ENCODE measurements at regions of chr3 and their contacts with region 1.

Region 1: GRCh38 chr3:116770815-116771450 is 61.4 kb downstream of the TUSC7 start:
- DNase-seq: peak; percentile 55
- H3K4me3 ChIP-seq: peak overlapping the region in 1 of 2 experiments; percentile 55; a peak in 1 of 4 replicates
- H3K27ac ChIP-seq: peak overlapping the region in 1 of 2 experiments; percentile 43; a peak in 1 of 4 replicates
- H3K4me1 ChIP-seq: no peaks in the 10 kb centered on the region; a peak in 2 of 4 replicates
- H3K27me3 ChIP-seq: no peaks in the 10 kb centered on the region
- CTCF ChIP-seq: peak; percentile 99
- EP300 ChIP-seq: no peak
- RAD21 ChIP-seq: peak; percentile 99

Region 2: GRCh38 chr3:116815321-116815720 is 44.4 kb after region 1 on chr3:
- CTCF ChIA-PET with region 1: interaction called, 11 read pairs
- POLR2A ChIA-PET with region 1: no interaction called
- DNase-seq: no peak
- H3K4me3 ChIP-seq: no peak overlapping the region
- H3K27ac ChIP-seq: peak overlapping the region; percentile 61 to 97; a peak in 3 of 4 replicates
- H3K4me1 ChIP-seq: peaks cover 11 to 30% of the 10 kb centered on the region in 2 experiments; a peak in 3 of 4 replicates
- H3K27me3 ChIP-seq: no peaks in the 10 kb centered on the region
- CTCF ChIP-seq: no peak
- EP300 ChIP-seq: no peak
- RAD21 ChIP-seq: no peak

Region 3: GRCh38 chr3:116912116-116912515 is 141.2 kb after region 1 on chr3:
- CTCF ChIA-PET with region 1: interaction called, 10 read pairs
- POLR2A ChIA-PET with region 1: no interaction called
- DNase-seq: no peak
- H3K4me3 ChIP-seq: no peak overlapping the region
- H3K27ac ChIP-seq: peak overlapping the region in 1 of 2 experiments; percentile 98; a peak in 2 of 4 replicates
- H3K4me1 ChIP-seq: peaks cover 0 to 12% of the 10 kb centered on the region in 2 experiments; a peak in 2 of 4 replicates
- H3K27me3 ChIP-seq: no peaks in the 10 kb centered on the region
- CTCF ChIP-seq: no peak
- EP300 ChIP-seq: peak in 1 of 2 experiments; percentile 44; a peak in 1 of 4 replicates
- RAD21 ChIP-seq: no peak

Region 4: DNA sequence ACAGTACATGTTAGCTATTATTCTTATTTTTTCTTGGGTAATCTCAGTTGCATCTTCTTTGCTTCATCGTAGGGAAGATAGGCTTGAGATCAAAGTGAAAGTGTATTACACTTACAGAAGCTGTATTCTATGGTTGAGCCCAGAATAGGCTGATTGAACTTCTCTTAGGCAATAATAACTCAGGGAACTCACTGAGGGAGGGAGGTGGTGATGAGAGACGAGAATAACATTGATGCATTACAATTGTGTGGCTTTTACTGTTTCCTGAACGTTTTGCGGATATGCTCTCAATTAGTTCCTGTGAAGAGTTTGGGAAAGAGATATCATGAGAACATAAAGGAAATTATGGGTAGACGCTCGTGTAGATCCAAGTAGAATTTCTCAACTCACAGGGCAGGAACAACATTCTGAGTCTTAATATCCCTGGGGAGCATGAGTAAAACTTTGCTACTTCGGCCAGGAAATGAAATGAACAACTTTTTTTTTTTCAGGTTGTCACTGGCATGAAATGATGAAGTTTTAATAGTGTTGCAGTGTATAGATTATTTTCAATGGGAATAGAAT is 240.8 kb after region 1 on chr3:
- CTCF ChIA-PET with region 1: interaction called, 12 read pairs
- POLR2A ChIA-PET with region 1: no interaction called
- DNase-seq: no peak
- H3K4me3 ChIP-seq: no peak overlapping the region
- H3K27ac ChIP-seq: no peak overlapping the region; a peak in 1 of 4 replicates
- H3K4me1 ChIP-seq: peaks cover 0 to 12% of the 10 kb centered on the region in 2 experiments; a peak in 2 of 4 replicates
- H3K27me3 ChIP-seq: no peaks in the 10 kb centered on the region
- CTCF ChIP-seq: no peak
- EP300 ChIP-seq: no peak
- RAD21 ChIP-seq: no peak

Region 5: DNA sequence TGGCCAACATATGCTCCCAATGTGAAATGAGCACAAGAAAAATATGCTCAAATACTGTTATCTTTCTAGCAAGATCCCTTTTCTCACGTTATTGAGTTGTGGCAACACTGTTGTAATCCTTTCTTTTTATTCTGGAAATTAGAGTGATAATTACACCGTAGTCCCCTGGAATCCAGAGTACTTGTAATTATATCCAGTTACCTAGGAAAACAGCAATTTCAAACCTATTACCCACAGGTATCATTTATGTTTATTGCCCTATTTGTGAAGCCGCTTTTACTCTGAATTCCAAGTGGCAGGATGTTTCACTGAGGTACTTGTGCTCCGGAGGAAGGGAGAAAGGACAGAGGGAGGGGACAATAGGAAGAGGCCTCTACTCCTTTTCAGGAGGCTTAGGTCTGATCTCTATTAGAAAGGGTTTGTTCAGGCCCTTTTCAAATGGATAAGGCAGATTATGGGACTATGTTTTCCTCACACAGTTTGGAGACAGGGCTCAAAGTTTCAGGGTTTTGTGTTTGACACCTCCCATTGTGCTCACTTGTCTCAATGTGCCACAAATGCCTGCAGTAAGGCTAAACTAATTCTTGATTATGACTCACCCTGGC is 585.3 kb after region 1 on chr3:
- CTCF ChIA-PET with region 1: interaction called, 12 read pairs
- POLR2A ChIA-PET with region 1: no interaction called
- DNase-seq: no peak
- H3K4me3 ChIP-seq: no peak overlapping the region
- H3K27ac ChIP-seq: no peak overlapping the region
- H3K4me1 ChIP-seq: peaks cover 0 to 2% of the 10 kb centered on the region in 2 experiments; a peak in 2 of 4 replicates
- H3K27me3 ChIP-seq: no peaks in the 10 kb centered on the region
- CTCF ChIP-seq: no peak
- EP300 ChIP-seq: no peak
- RAD21 ChIP-seq: no peak

Region 6: GRCh38 chr3:117532268-117532667 is 761.3 kb after region 1 on chr3:
- CTCF ChIA-PET with region 1: interaction called, 12 read pairs
- POLR2A ChIA-PET with region 1: no interaction called
- DNase-seq: no peak
- H3K4me3 ChIP-seq: no peak overlapping the region
- H3K27ac ChIP-seq: no peak overlapping the region
- H3K4me1 ChIP-seq: peaks cover 0 to 9% of the 10 kb centered on the region in 2 experiments; a peak in 2 of 4 replicates
- H3K27me3 ChIP-seq: no peaks in the 10 kb centered on the region
- CTCF ChIP-seq: no peak
- EP300 ChIP-seq: no peak
- RAD21 ChIP-seq: no peak

Measured in SK-N-SH (cell line).